IMR-90 (cell line): ENCODE measurements at regions of chr2 and their contacts with region 1.

Region 1: GRCh38 chr2:120312861-120313694 is 32.9 kb upstream of the INHBB start:
- DNase-seq: peak; percentile 82
- ATAC-seq: peak; percentile 93
- H3K4me3 ChIP-seq: peak overlapping the region; percentile 44
- H3K27ac ChIP-seq: no peak overlapping the region
- H3K4me1 ChIP-seq: no peaks in the 10 kb centered on the region; the same call in 1 of the 2 replicates
- H3K27me3 ChIP-seq: peaks cover 10% of the 10 kb centered on the region
- CTCF ChIP-seq: peak; percentile 92
- POLR2A ChIP-seq: no peak; the same call in 1 of the 2 replicates
- RAD21 ChIP-seq: peak; percentile 86

Region 2: DNA sequence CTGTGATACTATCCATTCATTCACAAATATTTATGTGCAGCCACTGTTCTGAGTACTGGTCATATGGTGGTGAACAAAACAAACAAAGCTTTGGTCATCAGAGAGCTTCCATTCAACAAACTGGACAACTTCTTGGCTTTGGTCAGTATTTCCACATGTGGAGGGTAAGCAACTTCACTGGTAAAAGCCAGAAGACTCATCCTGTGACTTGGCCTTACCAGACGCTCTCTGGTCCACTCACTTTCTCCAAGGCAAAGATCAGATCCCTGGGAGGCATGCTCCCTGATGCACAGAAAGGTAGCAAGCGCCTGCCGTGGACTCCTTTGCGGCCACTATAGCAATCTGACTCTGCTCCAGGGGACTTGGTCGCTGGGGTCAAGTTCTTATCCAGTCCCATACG is 1645.1 kb before region 1 on chr2:
- CTCF ChIA-PET with region 1: no interaction called
- POLR2A ChIA-PET with region 1: no interaction called
- dilution Hi-C with region 1: no loop called
- in situ Hi-C with region 1: no loop called
- intact Hi-C with region 1: no loop called
- DNase-seq: peak; percentile 79
- ATAC-seq: peak; percentile 25
- H3K4me3 ChIP-seq: no peak overlapping the region
- H3K27ac ChIP-seq: no peak overlapping the region; the same call in 1 of the 2 replicates
- H3K4me1 ChIP-seq: peaks cover 7% of the 10 kb centered on the region
- H3K27me3 ChIP-seq: no peaks in the 10 kb centered on the region
- CTCF ChIP-seq: no peak
- POLR2A ChIP-seq: no peak; the same call in 1 of the 2 replicates
- RAD21 ChIP-seq: no peak

Region 3: DNA sequence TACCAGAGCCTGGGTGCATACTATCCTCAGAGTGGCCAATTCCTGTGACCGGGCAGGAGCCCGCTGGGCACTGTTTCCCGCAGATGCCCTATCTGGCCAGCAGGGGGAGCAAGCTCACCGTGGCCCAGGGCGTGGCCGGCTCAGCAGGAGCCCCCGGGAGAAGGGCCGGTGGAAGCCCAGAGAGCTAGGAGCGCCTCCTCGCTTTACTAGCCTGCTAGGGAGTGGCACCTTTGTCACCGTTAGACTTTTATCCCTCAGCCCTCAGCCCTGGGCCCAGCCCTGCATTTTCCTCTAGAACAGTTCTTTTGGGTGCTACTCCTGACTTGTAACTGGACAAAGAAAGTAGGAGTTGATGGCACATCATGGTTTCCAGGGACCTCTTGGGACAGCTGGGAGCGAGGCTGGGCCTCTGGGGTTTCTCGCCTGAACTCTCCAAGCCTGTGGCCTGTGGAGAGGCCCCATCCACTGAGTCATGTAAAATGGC is 610.1 kb before region 1 on chr2:
- CTCF ChIA-PET with region 1: no interaction called
- POLR2A ChIA-PET with region 1: no interaction called
- dilution Hi-C with region 1: no loop called
- in situ Hi-C with region 1: no loop called
- intact Hi-C with region 1: loop called (anchors 1 kb)
- DNase-seq: peak; percentile 46
- ATAC-seq: peak; percentile 99
- H3K4me3 ChIP-seq: no peak overlapping the region
- H3K27ac ChIP-seq: no peak overlapping the region
- H3K4me1 ChIP-seq: no peaks in the 10 kb centered on the region
- H3K27me3 ChIP-seq: peaks cover 14% of the 10 kb centered on the region; the same call in 1 of the 2 replicates
- CTCF ChIP-seq: peak; percentile 91
- POLR2A ChIP-seq: no peak
- RAD21 ChIP-seq: peak; percentile 91

Region 4: GRCh38 chr2:119753041-119753929 is 559.8 kb before region 1 on chr2:
- CTCF ChIA-PET with region 1: no interaction called
- POLR2A ChIA-PET with region 1: no interaction called
- dilution Hi-C with region 1: no loop called
- in situ Hi-C with region 1: no loop called
- intact Hi-C with region 1: loop called (anchors 2 kb)
- DNase-seq: peak; percentile 56
- ATAC-seq: peak; percentile 81
- H3K4me3 ChIP-seq: no peak overlapping the region
- H3K27ac ChIP-seq: no peak overlapping the region
- H3K4me1 ChIP-seq: peaks cover 1% of the 10 kb centered on the region; the same call in 1 of the 2 replicates
- H3K27me3 ChIP-seq: peaks cover 2% of the 10 kb centered on the region; the same call in 1 of the 2 replicates
- CTCF ChIP-seq: peak; percentile 78
- POLR2A ChIP-seq: no peak
- RAD21 ChIP-seq: peak; percentile 78

Region 5: GRCh38 chr2:120109186-120110061 is 203.7 kb before region 1 on chr2:
- CTCF ChIA-PET with region 1: interaction called, 3 read pairs
- POLR2A ChIA-PET with region 1: no interaction called
- dilution Hi-C with region 1: no loop called
- in situ Hi-C with region 1: no loop called
- intact Hi-C with region 1: loop called (anchors 2 kb)
- DNase-seq: peak; percentile 59
- ATAC-seq: peak; percentile 71
- H3K4me3 ChIP-seq: no peak overlapping the region
- H3K27ac ChIP-seq: no peak overlapping the region
- H3K4me1 ChIP-seq: no peaks in the 10 kb centered on the region; the same call in none of the 2 replicates
- H3K27me3 ChIP-seq: no peaks in the 10 kb centered on the region
- CTCF ChIP-seq: peak; percentile 54
- POLR2A ChIP-seq: no peak
- RAD21 ChIP-seq: peak; percentile 67

Region 6: GRCh38 chr2:120252225-120253021 is 60.7 kb before region 1 on chr2 and contains the start of gene RALB:
- CTCF ChIA-PET with region 1: interaction called, 5 read pairs
- POLR2A ChIA-PET with region 1: no interaction called
- dilution Hi-C with region 1: no loop called
- in situ Hi-C with region 1: no loop called
- intact Hi-C with region 1: loop called (anchors 1 kb)
- DNase-seq: peak; percentile 97
- ATAC-seq: peak; percentile 94
- H3K4me3 ChIP-seq: peak within 1 kb of the TSS; percentile 74
- H3K27ac ChIP-seq: peak within 1 kb of the TSS; percentile 80
- H3K4me1 ChIP-seq: peaks cover 5% of the 10 kb centered on the region; the same call in 1 of the 2 replicates
- H3K27me3 ChIP-seq: peaks cover 11% of the 10 kb centered on the region; the same call in 1 of the 2 replicates
- CTCF ChIP-seq: no peak
- POLR2A ChIP-seq: peak; percentile 54
- RAD21 ChIP-seq: no peak
- total RNA-seq, gene RALB: 53.6 and 75.3 TPM in 2 replicates

Region 7: DNA sequence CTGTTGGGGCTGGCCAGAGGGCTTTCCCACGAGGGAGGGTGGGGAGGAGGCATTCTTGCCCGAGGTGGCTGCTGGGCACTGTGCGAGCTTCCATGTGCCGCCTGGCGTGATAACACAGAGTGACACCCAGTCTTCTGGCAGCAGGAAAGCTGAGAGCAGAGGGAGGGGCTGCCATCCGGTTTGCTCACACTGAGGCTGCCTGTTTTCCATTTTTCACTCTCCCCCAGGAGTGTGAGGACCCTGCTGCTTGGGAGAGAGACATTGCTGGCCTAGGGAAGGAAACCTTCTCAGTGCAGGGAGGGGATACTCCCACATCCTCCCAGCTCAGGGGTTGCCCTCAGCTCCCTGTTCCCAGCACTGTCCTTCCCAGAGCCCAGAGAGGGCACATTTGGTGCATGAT is 106.0 kb after region 1 on chr2:
- CTCF ChIA-PET with region 1: no interaction called
- POLR2A ChIA-PET with region 1: no interaction called
- dilution Hi-C with region 1: no loop called
- in situ Hi-C with region 1: no loop called
- intact Hi-C with region 1: no loop called
- DNase-seq: no peak
- ATAC-seq: no peak
- H3K4me3 ChIP-seq: no peak overlapping the region
- H3K27ac ChIP-seq: no peak overlapping the region
- H3K4me1 ChIP-seq: no peaks in the 10 kb centered on the region
- H3K27me3 ChIP-seq: peaks cover 77% of the 10 kb centered on the region
- CTCF ChIP-seq: no peak
- POLR2A ChIP-seq: no peak
- RAD21 ChIP-seq: no peak